ENCODE measurements at regions of chr2 and their contacts with region 1.

Region 1: DNA sequence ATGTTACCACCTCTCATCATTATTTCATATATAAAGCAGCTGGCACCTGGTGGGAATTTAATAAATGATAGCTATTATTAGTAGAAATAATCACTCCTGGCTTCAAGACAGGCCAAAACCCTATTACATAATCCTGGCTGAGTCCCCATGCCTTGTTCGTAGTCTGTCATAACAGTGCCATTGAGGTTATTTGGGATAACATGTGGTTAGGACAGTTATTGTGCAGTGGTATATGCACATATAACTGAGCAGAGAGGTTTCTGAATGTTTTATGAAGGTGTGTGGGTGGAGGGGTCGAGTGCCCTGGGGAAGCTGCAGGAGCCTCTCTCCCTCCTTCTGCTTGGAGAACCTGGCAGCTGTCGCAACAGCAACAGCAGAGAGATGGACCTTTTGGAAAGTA is 162.4 kb upstream of the NABP1 start:
- DNase-seq: no peak
- ATAC-seq: no peak
- H3K4me3 ChIP-seq: no peak overlapping the region
- H3K27ac ChIP-seq: no peak overlapping the region
- H3K4me1 ChIP-seq: no peaks in the 10 kb centered on the region
- H3K27me3 ChIP-seq: no peaks in the 10 kb centered on the region; a peak in 2 of 4 replicates
- CTCF ChIP-seq: no peak
- EP300 ChIP-seq: no peak
- POLR2A ChIP-seq: no peak
- RAD21 ChIP-seq: no peak

Region 2: GRCh38 chr2:191231995-191232394 is 283.6 kb before region 1 on chr2:
- CTCF ChIA-PET with region 1: no interaction called
- POLR2A ChIA-PET with region 1: no interaction called
- RAD21 ChIA-PET with region 1: no interaction called
- SMC1A ChIA-PET with region 1: no interaction called
- in situ Hi-C with region 1: no loop called
- intact Hi-C with region 1: loop called (anchors 5 kb)
- DNase-seq: no peak
- ATAC-seq: no peak
- H3K4me3 ChIP-seq: no peak overlapping the region
- H3K27ac ChIP-seq: no peak overlapping the region
- H3K4me1 ChIP-seq: 0 out of 2 replicates have a peak, but pooled peaks cover 8% of the 10 kb centered on the region
- H3K27me3 ChIP-seq: no peaks in the 10 kb centered on the region
- CTCF ChIP-seq: peak; percentile 16 to 33 (median 28); a peak in 3 of 6 replicates
- EP300 ChIP-seq: no peak
- POLR2A ChIP-seq: no peak
- RAD21 ChIP-seq: no peak

Region 3: GRCh38 chr2:191777351-191777750 is 261.8 kb after region 1 on chr2:
- CTCF ChIA-PET with region 1: no interaction called
- POLR2A ChIA-PET with region 1: no interaction called
- RAD21 ChIA-PET with region 1: no interaction called
- SMC1A ChIA-PET with region 1: no interaction called
- in situ Hi-C with region 1: no loop called
- intact Hi-C with region 1: no loop called
- DNase-seq: no peak
- ATAC-seq: no peak
- H3K4me3 ChIP-seq: no peak overlapping the region
- H3K27ac ChIP-seq: no peak overlapping the region
- H3K4me1 ChIP-seq: no peaks in the 10 kb centered on the region
- H3K27me3 ChIP-seq: no peaks in the 10 kb centered on the region
- CTCF ChIP-seq: no peak
- EP300 ChIP-seq: no peak
- POLR2A ChIP-seq: no peak
- RAD21 ChIP-seq: no peak